Endothelial cell of umbilical vein (primary cell): ENCODE measurements at regions of chr15 and their contacts with region 1.

Region 1: DNA sequence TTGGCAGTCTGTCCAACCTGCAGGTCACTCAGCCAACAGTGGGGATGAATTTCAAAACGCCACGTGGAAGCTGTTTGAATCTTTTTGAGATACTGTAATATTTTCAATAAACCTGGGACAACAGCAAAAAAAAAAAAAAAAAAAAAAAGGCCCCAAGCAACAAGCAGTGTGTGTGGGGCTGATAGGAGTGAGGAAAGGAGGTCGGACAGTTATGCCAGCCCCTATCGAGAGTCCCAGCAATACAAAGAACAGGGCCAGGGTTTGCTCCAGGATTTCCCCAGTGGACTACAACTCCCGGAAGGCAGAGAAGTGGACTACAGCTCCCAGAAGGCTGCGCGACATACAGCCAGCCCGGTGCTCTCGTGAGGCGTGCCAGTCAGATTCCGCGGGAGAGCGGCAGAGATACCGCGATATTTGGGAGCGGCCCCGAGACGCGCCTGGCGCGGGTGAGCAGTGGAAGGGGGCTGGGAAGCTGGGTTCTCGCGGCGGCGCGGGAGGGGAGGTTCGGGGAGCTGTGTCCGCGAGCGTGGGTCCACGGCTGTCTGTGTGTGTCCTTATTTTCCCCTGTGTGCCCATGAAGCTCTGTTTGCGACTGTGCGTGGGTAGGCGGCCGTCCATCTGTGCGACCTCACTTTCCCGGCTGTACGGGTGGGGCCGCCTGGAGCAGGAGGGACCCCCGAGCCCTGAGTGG is at the start of gene PPCDC:
- DNase-seq: peak; percentile 96
- H3K4me3 ChIP-seq: peak within 1 kb of the TSS; percentile 62 to 88 (median 81)
- H3K27ac ChIP-seq: peak within 1 kb of the TSS; percentile 80
- H3K4me1 ChIP-seq: no peaks in the 10 kb centered on the region
- H3K27me3 ChIP-seq: no peaks in the 10 kb centered on the region
- CTCF ChIP-seq: no peak
- POLR2A ChIP-seq: peak; percentile 97
- total RNA-seq, gene PPCDC: 14.5 and 16.8 TPM in 2 replicates

Region 2: DNA sequence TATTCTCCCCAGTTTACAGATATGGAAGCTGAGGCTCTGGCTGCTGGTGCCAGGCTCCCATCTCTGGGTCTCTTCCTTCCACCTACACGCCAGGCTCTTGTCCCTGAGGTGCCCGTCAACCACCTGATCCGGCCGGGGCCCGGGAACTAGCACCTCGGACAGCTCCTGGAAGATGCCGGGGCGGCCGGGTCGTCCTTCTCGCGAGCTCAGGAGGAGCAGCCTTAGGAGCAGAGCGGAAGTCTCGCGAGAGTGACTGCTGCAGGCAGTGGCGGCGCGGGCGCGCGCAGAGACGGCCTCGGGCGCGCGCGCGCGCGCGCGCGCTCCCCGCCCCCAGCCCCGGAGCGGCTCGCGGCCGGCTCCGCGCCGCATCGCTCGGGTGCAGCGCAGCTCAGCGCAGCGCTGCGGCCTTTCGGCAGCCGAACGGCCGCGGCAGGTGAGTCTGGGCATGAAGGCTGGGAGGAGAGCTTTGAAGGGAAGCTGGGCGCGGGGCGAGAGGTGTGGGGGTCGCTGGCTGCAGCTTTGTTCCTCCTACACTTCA is 28.0 kb before region 1 on chr15 and contains the start of gene SCAMP5:
- CTCF ChIA-PET with region 1: interaction called, 4 read pairs
- POLR2A ChIA-PET with region 1: no interaction called
- dilution Hi-C with region 1: no loop called
- intact Hi-C with region 1: loop called (anchors 2 kb)
- DNase-seq: peak; percentile 79
- H3K4me3 ChIP-seq: peak within 1 kb of the TSS; percentile 24 to 75 (median 61)
- H3K27ac ChIP-seq: no peak within 1 kb of the TSS
- H3K4me1 ChIP-seq: peaks cover 15% of the 10 kb centered on the region
- H3K27me3 ChIP-seq: peaks cover 11 to 20% of the 10 kb centered on the region in 2 experiments
- CTCF ChIP-seq: no peak
- POLR2A ChIP-seq: no peak
- total RNA-seq, gene SCAMP5: 1.9 and 4.4 TPM in 2 replicates

Region 3: GRCh38 chr15:75307778-75308391 is 284.6 kb after region 1 on chr15:
- CTCF ChIA-PET with region 1: no interaction called
- POLR2A ChIA-PET with region 1: no interaction called
- dilution Hi-C with region 1: no loop called
- intact Hi-C with region 1: loop called (anchors 10 kb)
- DNase-seq: peak; percentile 12
- H3K4me3 ChIP-seq: no peak overlapping the region
- H3K27ac ChIP-seq: no peak overlapping the region
- H3K4me1 ChIP-seq: no peaks in the 10 kb centered on the region
- H3K27me3 ChIP-seq: peaks cover 30 to 37% of the 10 kb centered on the region in 2 experiments
- CTCF ChIP-seq: peak; percentile 27 to 55
- POLR2A ChIP-seq: no peak